Naive thymus-derived CD8-positive, alpha-beta T cell (primary cell): ENCODE measurements at regions of chr1 and their contacts with region 1.

Region 1: DNA sequence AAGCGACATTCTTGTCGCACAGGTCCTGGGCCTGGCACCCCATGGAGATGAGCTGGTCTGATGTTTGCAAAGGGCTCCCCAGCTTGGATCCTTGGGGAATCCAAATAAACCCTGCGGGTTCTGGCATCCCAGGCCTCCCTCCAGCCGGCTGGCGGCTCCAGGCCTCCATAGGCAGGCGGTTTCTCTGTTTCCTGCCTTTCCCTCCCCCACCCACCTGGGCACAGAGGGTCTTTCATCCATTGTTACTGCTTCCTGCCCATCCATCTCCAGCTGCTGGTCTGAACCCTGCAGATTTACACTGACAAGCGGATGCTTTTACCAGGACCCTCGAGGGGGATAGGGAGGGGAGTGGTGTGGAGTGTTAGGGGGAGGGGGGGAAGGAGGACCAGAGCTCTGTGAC is 39.1 kb upstream of the ID3 start:
- DNase-seq: no peak
- ATAC-seq: no peak
- H3K4me3 Mint-ChIP-seq: peak overlapping the region in 3 of 10 donors; percentile 16 to 82 (median 67)
- H3K27ac Mint-ChIP-seq: peak overlapping the region in 7 of 10 donors; percentile 49 to 97 (median 85)
- H3K4me1 Mint-ChIP-seq: peaks cover 45 to 98% (median 95%) of the 10 kb centered on the region in 4 donors
- H3K27me3 Mint-ChIP-seq: no peaks in the 10 kb centered on the region

Region 2: GRCh38 chr1:23567996-23568607 is 30.3 kb before region 1 on chr1:
- POLR2A ChIA-PET with region 1: interaction called, 359 read pairs
- DNase-seq: no peak
- ATAC-seq: peak; percentile 42 to 72
- H3K4me3 Mint-ChIP-seq: peak overlapping the region; percentile 81 to 99 (median 93)
- H3K27ac Mint-ChIP-seq: peak overlapping the region; percentile 22 to 94 (median 88)
- H3K4me1 Mint-ChIP-seq: peaks cover 17 to 37% (median 31%) of the 10 kb centered on the region in 4 donors
- H3K27me3 Mint-ChIP-seq: peaks cover 0 to 12% (median 0%) of the 10 kb centered on the region in 5 donors

Region 3: DNA sequence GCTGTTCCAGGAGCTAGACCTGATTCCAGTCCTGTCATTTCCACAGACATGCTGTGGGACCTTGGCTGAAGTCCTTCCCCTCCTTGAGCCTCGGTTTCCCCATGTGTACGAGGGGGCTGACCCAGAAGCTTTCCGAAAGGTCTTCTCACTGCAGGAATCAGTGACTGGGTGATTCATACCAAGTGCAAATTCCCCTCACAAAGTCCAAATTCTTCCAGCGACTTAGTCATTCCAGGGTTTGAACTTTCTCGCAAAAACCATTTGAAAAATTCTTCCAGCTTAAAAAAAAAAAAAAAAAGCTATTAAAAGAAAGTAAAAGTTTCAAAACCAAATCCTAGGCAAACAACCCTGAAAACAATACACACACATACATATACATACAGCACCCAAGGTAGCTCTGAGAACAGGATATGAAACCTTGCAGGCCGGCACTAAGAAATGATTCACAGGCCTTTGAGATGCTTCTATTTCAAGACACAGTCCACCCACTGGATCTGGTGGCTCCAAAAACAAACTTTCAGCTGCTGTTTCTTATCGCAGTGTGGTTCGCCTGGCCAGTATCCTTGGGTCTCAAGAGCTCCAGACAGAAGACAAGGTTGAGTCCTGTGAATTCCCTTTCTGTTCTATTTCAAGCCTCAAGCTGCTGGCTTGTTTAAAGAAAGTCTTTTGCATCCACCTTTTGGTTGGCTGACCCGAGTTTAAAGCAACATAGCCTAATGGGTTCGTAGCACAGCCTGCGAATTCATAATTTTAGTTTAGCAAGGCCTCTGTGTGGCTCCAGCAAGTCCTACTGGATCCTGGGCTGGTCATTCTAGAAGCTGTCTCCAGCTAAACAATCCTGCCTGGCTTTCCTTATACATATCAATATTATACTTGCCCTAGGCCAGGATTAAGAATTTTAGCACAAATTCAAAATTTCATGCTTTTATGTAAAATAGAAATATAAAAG is 21.1 kb before region 1 on chr1:
- POLR2A ChIA-PET with region 1: interaction called, 44 read pairs
- DNase-seq: no peak
- ATAC-seq: peak; percentile 68 to 78
- H3K4me3 Mint-ChIP-seq: peak overlapping the region; percentile 21 to 65 (median 58)
- H3K27ac Mint-ChIP-seq: peak overlapping the region; percentile 70 to 94 (median 86)
- H3K4me1 Mint-ChIP-seq: peaks cover 28 to 74% (median 69%) of the 10 kb centered on the region in 4 donors
- H3K27me3 Mint-ChIP-seq: no peaks in the 10 kb centered on the region

Region 4: DNA sequence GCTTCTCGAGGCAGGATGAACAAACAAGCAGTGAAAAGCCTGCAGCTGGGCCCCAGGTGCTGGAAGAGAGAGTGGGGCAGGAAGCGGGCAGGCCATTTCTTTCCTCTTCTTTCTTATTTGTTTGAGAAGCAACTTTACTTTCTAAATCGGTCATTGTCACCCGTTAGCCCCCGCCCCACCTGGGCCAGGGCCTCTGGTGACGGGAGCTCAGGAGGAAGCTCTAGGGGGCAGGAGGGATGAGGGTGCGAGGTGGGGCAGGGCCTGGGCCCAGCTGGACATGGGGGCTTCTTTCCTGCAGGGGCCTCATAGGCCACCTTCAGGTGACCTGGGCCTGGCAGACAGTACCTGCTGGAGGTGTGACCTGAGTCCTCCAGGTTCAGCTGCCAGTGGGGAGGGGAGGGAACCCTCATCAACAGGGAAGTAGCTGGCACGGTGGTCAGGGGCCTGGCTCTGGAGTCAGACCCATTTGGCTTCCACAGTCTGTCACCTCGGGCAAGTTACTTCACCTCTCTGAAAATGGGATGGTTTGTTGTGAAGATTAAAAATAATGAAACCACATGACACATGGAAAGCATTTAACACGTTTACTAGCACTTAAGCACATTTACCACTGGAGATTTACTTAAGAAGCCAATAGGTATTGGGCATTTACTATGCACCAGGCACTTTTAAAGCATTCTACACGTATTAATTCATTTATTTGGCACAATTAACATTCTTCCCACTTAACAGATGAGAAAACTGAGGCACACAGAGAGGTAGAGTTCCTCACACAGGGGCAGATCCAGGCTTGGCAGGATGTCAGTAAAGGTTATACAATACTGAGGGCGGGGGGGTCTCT is 15.0 kb after region 1 on chr1:
- POLR2A ChIA-PET with region 1: interaction called, 182 read pairs
- DNase-seq: peak in 6 of 10 donors; percentile 24 to 76 (median 50)
- ATAC-seq: peak; percentile 59 to 62
- H3K4me3 Mint-ChIP-seq: peak overlapping the region; percentile 43 to 81 (median 64)
- H3K27ac Mint-ChIP-seq: peak overlapping the region; percentile 86 to 100 (median 94)
- H3K4me1 Mint-ChIP-seq: peaks cover 51 to 92% (median 83%) of the 10 kb centered on the region in 4 donors
- H3K27me3 Mint-ChIP-seq: peaks cover 0 to 2% (median 0%) of the 10 kb centered on the region in 5 donors

Region 5: GRCh38 chr1:23619299-23620188 is 21.1 kb after region 1 on chr1:
- POLR2A ChIA-PET with region 1: interaction called, 182 read pairs
- DNase-seq: peak; percentile 71 to 93 (median 82)
- ATAC-seq: peak; percentile 80 to 84
- H3K4me3 Mint-ChIP-seq: peak overlapping the region; percentile 68 to 87 (median 80)
- H3K27ac Mint-ChIP-seq: peak overlapping the region; percentile 94 to 100 (median 96)
- H3K4me1 Mint-ChIP-seq: peaks cover 58 to 92% (median 91%) of the 10 kb centered on the region in 4 donors
- H3K27me3 Mint-ChIP-seq: peaks cover 0 to 7% (median 0%) of the 10 kb centered on the region in 5 donors

Region 6: GRCh38 chr1:23627069-23627735 is 28.8 kb after region 1 on chr1:
- POLR2A ChIA-PET with region 1: interaction called, 182 read pairs
- DNase-seq: peak in 6 of 10 donors; percentile 25 to 72 (median 58)
- ATAC-seq: peak; percentile 79 to 88
- H3K4me3 Mint-ChIP-seq: peak overlapping the region; percentile 77 to 95 (median 91)
- H3K27ac Mint-ChIP-seq: peak overlapping the region; percentile 84 to 97 (median 94)
- H3K4me1 Mint-ChIP-seq: peaks cover 42 to 74% (median 72%) of the 10 kb centered on the region in 4 donors
- H3K27me3 Mint-ChIP-seq: no peaks in the 10 kb centered on the region

Region 7: DNA sequence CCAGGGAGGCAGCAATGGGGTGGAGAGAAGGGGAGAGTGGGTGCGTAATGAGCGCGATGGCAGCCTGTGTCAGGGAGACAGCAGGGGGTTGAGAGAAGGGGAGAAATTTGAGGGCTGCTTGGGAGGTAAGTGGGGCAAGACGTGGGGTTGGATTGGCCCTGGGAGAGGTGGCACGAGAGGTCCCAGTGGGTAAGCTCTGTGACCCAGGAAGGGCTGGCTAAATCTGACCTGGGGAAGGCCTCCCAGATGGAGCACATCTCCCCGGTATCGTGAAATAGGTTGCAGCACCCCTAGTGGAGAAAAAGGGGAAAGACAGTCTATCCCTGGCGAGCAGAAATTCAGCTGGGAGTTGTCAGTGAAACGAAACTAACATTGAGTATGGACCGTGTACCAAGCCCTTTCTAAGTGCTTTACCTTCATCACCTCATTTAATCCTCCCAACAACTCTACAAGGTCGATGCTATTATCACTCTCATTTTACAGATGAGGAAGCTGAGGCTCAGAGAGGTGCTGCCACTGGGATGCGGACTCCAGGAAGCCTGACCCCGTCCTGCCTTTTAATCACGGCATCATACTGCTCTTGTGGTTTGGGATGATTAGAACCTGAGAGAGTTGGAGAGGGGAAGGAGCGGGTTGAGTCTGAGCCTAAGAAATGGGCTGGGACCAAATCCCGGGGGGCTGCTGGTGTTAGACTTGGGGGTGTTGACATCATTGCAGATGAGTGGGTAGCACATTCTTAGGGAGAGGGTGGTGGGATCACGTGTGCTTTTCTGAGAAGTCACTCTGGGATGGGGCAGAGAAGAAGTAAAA is 36.6 kb after region 1 on chr1:
- POLR2A ChIA-PET with region 1: interaction called, 20 read pairs
- DNase-seq: peak in 9 of 10 donors; percentile 52 to 77 (median 67)
- ATAC-seq: peak; percentile 83 to 84
- H3K4me3 Mint-ChIP-seq: peak overlapping the region; percentile 52 to 80 (median 74)
- H3K27ac Mint-ChIP-seq: peak overlapping the region; percentile 89 to 98 (median 93)
- H3K4me1 Mint-ChIP-seq: peaks cover 20 to 51% (median 41%) of the 10 kb centered on the region in 4 donors
- H3K27me3 Mint-ChIP-seq: no peaks in the 10 kb centered on the region

Region 8: DNA sequence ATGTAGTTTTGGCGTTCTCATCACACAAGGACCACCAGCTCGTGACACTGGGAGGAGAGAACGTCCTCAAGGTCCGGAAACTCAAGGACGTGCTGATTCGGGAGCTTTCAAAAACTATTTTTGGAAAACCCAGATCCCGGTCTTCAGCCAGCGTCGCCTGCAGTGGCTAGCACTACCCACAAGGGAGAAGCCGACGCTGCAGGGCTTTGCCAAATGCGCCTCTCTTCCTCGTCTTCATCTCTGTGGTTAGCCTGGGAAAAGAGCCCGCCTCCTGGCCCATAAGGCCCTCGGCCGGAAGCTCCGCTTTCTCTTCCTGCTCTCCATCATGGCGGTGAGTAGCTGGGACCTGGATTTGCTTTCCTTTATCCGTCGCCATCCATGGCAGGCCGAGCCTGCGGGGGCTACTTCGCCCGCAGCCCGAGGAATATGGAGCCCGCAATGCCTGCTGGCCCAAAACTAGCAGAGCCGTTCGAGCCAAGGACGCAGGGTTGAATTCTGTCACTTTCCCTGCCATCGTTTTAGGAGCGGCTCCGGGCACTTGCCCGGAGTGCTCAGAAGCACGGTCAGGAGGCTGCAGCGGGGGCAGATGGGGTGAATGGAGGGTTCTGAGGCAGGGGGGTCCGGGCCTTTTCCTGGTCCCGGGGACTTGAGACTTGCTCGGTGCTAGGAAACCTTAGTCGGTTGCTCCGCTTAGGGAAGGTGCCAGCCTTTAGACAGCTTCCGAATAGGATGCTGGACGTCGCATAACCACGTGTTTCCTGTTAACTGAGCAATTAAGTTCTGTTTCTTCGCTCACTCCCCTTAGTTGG is 93.3 kb after region 1 on chr1 and contains the start of gene RPL11:
- POLR2A ChIA-PET with region 1: no interaction called
- DNase-seq: peak; percentile 63 to 93 (median 84)
- ATAC-seq: peak; percentile 98
- H3K4me3 Mint-ChIP-seq: peak within 1 kb of the TSS; percentile 90 to 98 (median 94)
- H3K27ac Mint-ChIP-seq: peak within 1 kb of the TSS; percentile 89 to 97 (median 95)
- H3K4me1 Mint-ChIP-seq: peaks cover 33 to 48% (median 47%) of the 10 kb centered on the region in 4 donors
- H3K27me3 Mint-ChIP-seq: peaks cover 0 to 2% (median 0%) of the 10 kb centered on the region in 5 donors
- polyA plus RNA-seq, gene RPL11: 1,566 to 1,847 (median 1,638) TPM